Tibial artery (tissue), 4 donors: ENCODE measurements at regions of chr15 and their contacts with region 1.

Region 1: DNA sequence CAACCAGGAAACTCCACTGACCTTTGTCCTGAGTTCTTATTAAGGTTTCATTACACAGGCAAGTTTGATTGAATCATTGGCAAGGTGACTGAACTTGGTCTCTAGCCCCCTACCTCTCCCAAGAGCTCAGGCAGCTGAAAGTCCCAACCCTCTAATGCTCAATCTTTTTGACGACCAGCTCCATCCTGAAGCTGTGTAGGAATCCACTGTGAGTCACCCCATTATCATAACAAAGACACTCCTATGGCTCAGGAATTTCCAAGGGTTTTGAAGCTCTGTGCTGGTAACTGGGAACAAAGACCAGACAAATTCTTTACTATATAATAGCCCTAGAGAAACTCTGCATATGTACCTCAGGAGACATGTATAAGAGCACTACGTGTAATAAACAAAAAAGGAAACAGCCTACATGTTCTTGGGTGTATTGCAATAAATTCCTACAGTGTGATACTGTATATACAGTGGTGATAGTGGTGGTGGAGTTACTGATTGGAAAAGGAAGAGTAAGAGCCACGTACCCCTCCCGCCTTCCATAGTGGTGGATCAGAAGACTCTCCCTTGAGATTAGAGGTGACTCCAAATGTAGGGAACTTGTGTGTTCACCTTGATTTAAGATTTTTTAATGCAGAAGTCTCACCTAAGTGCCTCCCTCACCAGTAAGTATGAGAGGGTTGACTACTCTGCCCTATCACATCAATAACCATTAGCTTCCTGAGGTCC is 116.6 kb downstream of the ST8SIA2 start:
- DNase-seq: no peak
- H3K4me3 ChIP-seq: no peak overlapping the region
- H3K27ac ChIP-seq: no peak overlapping the region
- H3K4me1 ChIP-seq: no peaks in the 10 kb centered on the region
- H3K27me3 ChIP-seq: no peaks in the 10 kb centered on the region
- CTCF ChIP-seq: no peak

Region 2: DNA sequence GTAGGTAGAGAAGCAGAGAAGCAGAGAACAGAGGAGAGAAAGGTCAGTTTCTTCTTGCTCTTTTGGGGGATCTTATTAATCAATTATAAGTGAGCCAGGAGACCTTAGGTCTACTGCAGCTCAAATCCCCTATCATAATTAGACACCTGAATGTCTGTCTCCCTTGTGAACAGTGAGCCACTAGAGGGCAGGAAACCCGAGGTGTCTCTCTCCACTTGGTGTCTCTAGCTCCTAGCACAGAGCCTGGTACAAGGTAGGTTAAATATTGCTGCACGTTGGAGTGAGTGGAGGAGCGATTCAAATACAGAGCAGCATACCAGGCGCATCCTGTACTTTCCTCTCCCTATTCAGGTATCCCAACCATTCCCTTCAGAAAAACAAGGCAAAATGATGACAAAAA is 118.7 kb before region 1 on chr15:
- intact Hi-C with region 1: loop called (anchors 10 kb)
- DNase-seq: no peak
- H3K4me3 ChIP-seq: no peak overlapping the region
- H3K27ac ChIP-seq: no peak overlapping the region
- H3K4me1 ChIP-seq: peaks cover 0 to 21% (median 7%) of the 10 kb centered on the region in 4 donors
- H3K27me3 ChIP-seq: peaks cover 0 to 63% of the 10 kb centered on the region in 2 donors
- CTCF ChIP-seq: no peak

Region 3: DNA sequence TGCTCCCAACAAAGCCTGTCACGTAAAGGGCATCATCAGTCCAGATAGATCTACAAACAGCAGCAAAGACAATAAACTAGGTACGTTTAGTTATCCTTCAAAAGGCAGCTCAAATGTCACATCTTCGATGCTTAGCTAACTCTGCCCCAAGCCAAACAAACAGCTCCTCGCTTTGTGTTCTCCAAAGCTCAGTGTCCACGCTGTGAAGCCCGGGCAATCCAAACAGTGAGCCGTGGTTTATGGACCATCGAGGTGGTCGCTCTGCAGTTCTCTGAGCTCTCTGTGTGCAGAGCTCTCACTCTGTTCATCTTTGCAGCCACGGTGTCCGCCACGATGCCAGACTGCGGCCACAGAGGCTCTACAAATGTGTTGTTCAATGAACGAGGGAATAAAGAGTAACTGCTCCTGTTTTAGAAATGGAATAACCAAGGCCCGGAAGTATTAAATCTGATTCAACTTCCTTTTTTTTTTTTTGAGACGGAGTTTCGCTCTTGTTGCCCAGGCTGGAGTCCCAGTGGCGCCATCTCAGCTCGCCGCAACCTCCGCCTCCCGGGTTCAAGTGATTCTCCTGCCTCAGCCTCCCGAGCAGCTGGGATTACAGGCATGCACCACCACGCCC is 262.4 kb after region 1 on chr15:
- intact Hi-C with region 1: no loop called
- DNase-seq: no peak
- H3K4me3 ChIP-seq: no peak overlapping the region
- H3K27ac ChIP-seq: no peak overlapping the region
- H3K4me1 ChIP-seq: no peaks in the 10 kb centered on the region
- H3K27me3 ChIP-seq: no peaks in the 10 kb centered on the region
- CTCF ChIP-seq: no peak